GM10248 (cell line): ENCODE measurements at regions of chr14 and their contacts with region 1.

Region 1: GRCh38 chr14:20855652-20856291 is 35.4 kb upstream of the RNASE3 start:
- DNase-seq: peak; percentile 67
- CTCF ChIP-seq: peak; percentile 68

Region 2: GRCh38 chr14:20690848-20691523 is 164.8 kb before region 1 on chr14:
- CTCF ChIA-PET with region 1: interaction called, 128 read pairs
- POLR2A ChIA-PET with region 1: no interaction called
- DNase-seq: peak; percentile 69
- CTCF ChIP-seq: peak; percentile 76

Region 3: DNA sequence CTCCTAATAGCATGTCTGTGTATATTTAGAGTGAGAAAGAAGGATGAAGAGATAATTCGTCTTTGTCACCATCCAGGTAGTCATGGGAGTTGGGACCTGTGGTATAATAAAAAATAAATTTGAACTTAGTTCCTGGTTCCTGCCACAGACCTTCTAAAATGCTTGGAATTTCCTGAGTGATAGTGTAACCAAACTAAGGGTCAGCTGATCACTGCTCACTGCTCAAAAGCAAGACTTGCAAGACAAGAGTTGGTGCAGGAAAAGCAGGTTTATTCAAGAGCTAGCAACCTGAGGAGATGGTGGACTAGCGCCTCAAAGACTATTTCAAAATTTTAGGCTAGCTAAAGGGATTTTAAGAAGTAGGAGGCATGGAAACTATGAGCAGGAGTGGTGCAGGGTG is 148.2 kb before region 1 on chr14:
- CTCF ChIA-PET with region 1: interaction called, 15 read pairs
- POLR2A ChIA-PET with region 1: no interaction called
- DNase-seq: no peak
- CTCF ChIP-seq: no peak

Region 4: GRCh38 chr14:20866963-20867362 is 11.2 kb after region 1 on chr14:
- CTCF ChIA-PET with region 1: interaction called, 39 read pairs
- POLR2A ChIA-PET with region 1: no interaction called
- DNase-seq: no peak
- CTCF ChIP-seq: peak; percentile 34

Region 5: GRCh38 chr14:20878695-20879094 is 22.9 kb after region 1 on chr14:
- CTCF ChIA-PET with region 1: interaction called, 39 read pairs
- POLR2A ChIA-PET with region 1: no interaction called
- DNase-seq: no peak
- CTCF ChIP-seq: no peak